Psoas muscle (tissue), 8 donors: ENCODE measurements at regions of chr17 and their contacts with region 1.

Region 1: GRCh38 chr17:12983991-12984884 is 33.6 kb downstream of the ELAC2 start:
- DNase-seq: peak; percentile 86 to 88
- ATAC-seq: peak; percentile 53 to 78 (median 76)
- H3K4me3 ChIP-seq: peak overlapping the region; percentile 28
- H3K27ac ChIP-seq: peak overlapping the region; percentile 41
- H3K4me1 ChIP-seq: no peaks in the 10 kb centered on the region
- H3K27me3 ChIP-seq: peaks cover 0 to 11% (median 8%) of the 10 kb centered on the region in 3 donors
- CTCF ChIP-seq: no peak

Region 2: GRCh38 chr17:12789777-12790609 is 194.2 kb before region 1 on chr17:
- intact Hi-C with region 1: loop called in 1 of 2 experiments (anchors 10 kb)
- DNase-seq: peak in 1 of 2 donors; percentile 15
- ATAC-seq: peak; percentile 3 to 39 (median 23)
- H3K4me3 ChIP-seq: peak overlapping the region; percentile 76
- H3K27ac ChIP-seq: no peak overlapping the region
- H3K4me1 ChIP-seq: no peaks in the 10 kb centered on the region
- H3K27me3 ChIP-seq: peaks cover 2 to 15% (median 4%) of the 10 kb centered on the region in 3 donors
- CTCF ChIP-seq: no peak